ENCODE measurements at regions of chr5 and their contacts with region 1.

Region 1: DNA sequence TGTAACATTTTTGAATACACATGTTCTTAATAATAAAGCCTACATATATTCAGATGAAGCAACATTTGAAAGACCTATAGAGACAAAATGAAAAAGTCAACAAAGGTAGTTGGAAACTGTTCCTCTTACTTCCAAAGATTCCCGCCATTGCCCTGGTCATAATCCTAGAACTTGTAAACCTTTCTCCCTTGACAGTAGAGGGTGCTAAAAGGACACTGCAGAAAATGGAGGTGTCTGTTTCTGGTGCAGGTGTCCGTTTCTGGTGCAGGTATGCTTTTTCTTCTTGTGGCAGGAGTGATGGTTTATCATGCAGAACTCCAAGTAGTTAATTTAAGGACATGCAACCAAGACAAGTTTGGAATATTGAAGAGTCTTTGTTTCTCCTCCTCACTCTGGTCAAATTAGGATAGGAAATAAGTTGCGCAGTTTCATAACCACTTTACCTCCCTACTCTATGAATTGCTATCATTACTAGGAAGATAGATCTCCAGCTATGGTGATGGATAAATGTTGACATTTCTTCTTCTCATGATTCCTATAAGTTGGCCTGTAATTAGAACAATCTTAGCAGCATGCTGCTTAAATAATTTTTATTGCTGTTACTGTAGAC is 56.0 kb upstream of the FAM174A start:
- DNase-seq: no peak
- ATAC-seq: no peak

Region 2: GRCh38 chr5:99911971-99912370 is 567.2 kb before region 1 on chr5:
- intact Hi-C with region 1: no loop called
- DNase-seq: no peak
- ATAC-seq: no peak

Region 3: GRCh38 chr5:100535060-100536005 is 56.1 kb after region 1 on chr5 and contains the start of gene FAM174A:
- intact Hi-C with region 1: no loop called
- DNase-seq: peak; percentile 97
- ATAC-seq: peak; percentile 100
- total RNA-seq, gene FAM174A: 14.5 TPM

Region 4: DNA sequence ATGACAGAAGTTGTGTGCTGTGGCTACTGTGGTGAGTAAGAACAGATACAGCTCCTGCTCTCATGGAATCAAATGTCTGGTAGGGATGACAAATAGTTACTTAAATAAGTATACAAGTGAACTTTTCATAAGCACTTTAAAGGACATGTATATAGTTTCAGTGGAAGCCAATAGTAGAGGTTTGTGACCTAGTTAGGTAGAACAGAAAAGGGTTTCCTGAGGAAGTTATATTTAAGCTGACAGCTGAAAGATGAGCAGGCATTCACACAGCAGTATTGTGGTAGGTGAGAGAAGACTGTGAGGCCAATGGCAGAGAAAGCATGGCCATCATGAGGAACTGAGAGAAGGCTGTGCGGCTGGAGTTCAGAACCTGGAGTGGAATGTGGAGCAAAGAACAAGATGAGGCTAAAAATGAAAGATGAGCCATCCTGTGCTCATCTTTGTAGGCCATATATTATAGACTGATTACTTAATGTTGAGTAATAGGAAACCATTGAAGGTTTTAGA is 71.4 kb after region 1 on chr5:
- intact Hi-C with region 1: no loop called
- DNase-seq: no peak
- ATAC-seq: no peak

Region 5: DNA sequence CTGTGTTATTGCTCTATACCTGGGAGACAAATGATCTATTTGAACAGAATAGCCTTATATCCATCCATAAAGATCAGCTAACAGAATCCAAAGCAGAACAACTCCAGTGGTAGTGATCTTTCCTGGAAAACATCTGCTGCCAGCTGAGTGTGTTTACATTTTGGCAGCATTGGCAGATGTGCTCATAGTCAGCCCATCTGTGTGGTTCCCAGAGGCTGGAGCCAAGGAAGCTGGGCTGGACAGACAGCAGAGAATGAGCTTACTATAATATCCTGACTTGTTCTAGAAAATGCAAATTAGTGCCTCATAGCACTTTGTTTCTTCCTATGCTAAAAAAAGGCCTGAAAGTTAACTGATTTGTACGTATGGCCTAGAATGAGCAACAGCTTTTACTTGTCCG is 324.2 kb after region 1 on chr5:
- intact Hi-C with region 1: loop called (anchors 5 kb)
- DNase-seq: no peak
- ATAC-seq: no peak

Measured in sciatic nerve (tissue), 2 donors.